ENCODE measurements at regions of chr16 and their contacts with region 1.

Region 1: DNA sequence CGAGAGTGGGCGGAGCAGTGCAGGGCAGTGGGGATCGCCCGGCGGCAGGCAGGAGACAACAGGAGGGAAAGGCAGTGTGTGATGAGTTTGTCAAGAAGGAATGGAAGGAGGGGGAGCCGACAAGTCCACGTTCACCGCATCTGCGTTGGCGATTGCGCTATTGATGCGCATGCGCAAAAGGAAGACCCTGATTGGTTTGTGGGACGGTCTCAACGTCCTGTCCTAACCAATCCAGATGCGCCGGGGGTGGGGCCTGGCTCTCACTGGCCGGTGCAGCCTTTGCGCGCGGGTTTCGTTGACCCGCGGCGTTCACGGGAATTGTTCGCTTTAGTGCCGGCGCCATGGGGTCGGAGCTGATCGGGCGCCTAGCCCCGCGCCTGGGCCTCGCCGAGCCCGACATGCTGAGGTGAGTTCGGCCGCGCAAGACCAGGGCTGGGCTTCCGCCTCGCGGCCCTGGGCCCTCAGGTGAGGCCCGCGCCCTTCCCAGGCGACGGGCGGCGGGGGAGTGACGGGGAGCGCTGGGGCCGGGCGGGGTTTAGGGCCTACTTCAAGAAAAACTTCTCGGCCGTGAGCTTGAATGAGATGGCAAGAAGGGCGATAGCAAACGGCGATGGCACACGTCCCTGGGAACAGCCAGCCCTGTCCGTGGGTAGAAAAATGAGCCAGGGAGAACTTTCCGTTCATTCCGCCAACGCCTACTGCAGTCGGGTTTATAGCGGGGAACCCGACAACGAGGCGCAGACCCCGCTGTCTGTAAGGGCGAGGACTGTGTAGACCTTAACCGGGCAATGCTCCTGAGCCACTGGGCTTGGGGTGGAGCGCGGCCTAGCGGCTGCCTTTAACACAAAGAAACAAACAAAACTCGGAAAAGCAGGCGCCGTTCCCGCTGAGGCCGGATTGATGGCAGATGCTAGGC is at the start of gene ORC6:
- DNase-seq: peak; percentile 96
- H3K4me3 Mint-ChIP-seq: no peak within 1 kb of the TSS
- H3K27ac Mint-ChIP-seq: no peak within 1 kb of the TSS
- H3K4me1 Mint-ChIP-seq: peaks cover 27% of the 10 kb centered on the region
- H3K27me3 Mint-ChIP-seq: no peaks in the 10 kb centered on the region
- total RNA-seq, gene ORC6: 35.1 to 35.8 TPM

Region 2: DNA sequence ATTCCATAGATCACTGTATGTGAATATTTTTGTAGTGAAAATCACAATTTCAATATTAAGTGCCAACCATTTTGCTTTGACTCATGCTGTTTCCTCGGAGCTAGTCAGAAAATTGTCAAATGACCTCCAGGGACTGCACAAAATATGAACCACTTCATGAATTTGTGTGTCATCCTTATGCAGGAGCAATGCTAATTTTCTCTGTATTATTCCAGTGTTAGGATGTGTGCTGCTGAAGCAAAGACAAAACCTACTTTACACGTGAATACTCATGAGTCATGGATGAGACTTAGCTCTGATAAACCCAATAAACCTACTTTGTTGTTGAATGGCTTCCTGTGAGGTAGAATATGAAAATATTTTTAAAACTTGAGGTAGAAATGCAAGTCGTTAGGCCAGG is 133.7 kb before region 1 on chr16:
- CTCF ChIA-PET with region 1: no interaction called
- POLR2A ChIA-PET with region 1: no interaction called
- DNase-seq: no peak
- H3K4me3 Mint-ChIP-seq: no peak overlapping the region
- H3K27ac Mint-ChIP-seq: no peak overlapping the region
- H3K4me1 Mint-ChIP-seq: no peaks in the 10 kb centered on the region
- H3K27me3 Mint-ChIP-seq: peaks cover 10% of the 10 kb centered on the region

Region 3: DNA sequence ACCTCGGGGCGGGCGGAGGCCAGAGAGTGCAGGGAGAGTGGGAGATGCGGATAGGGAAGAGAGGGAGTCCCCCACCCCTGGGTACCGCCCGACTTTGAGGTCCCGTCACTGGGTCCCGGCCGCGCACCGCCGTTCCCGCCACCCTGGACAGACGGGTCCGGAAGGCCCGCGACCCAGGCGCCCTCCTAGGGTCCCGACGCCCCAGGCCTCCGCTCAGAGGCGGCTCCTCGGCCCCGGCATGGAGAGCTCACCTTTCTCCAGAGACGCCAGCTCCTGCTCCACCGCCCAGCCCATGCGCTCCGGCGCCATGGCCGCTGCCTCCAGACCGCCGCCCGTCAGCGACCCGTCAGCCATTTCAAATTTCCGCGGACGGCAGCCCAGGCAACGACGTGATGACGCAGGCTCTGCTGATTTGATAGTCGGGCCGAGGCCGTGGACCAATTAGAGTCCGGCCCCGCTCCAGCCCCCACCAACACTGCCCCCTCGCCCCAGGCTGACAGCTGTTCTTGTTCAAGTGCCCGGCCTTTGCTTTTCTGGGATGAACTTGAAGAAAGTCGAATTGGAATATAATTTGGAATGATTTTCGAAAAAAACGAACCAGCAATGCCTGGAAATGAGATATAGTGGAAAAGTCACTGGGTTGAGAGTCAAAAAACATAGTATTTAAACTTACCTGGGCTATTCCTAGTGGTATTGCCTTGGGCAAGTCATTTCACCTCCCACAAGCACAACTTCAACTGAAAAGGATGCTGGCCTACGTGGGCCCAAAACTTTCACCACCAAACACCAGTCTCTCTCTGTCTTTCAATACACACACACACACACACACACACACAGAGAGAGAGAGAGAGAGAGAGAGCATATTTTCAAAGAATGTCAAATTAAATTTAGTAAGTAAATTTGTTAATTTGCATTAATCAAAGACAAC is 68.4 kb before region 1 on chr16 and contains the start of gene SHCBP1:
- CTCF ChIA-PET with region 1: no interaction called
- POLR2A ChIA-PET with region 1: interaction called, 24 read pairs
- DNase-seq: peak; percentile 89
- H3K4me3 Mint-ChIP-seq: peak within 1 kb of the TSS; percentile 93
- H3K27ac Mint-ChIP-seq: peak within 1 kb of the TSS; percentile 91
- H3K4me1 Mint-ChIP-seq: peaks cover 35% of the 10 kb centered on the region
- H3K27me3 Mint-ChIP-seq: no peaks in the 10 kb centered on the region
- total RNA-seq, gene SHCBP1: 51.0 to 52.5 TPM

Region 4: GRCh38 chr16:46658925-46659324 is 30.7 kb before region 1 on chr16:
- CTCF ChIA-PET with region 1: no interaction called
- POLR2A ChIA-PET with region 1: no interaction called
- DNase-seq: peak; percentile 30
- H3K4me3 Mint-ChIP-seq: no peak overlapping the region
- H3K27ac Mint-ChIP-seq: peak overlapping the region; percentile 24
- H3K4me1 Mint-ChIP-seq: peaks cover 13% of the 10 kb centered on the region
- H3K27me3 Mint-ChIP-seq: no peaks in the 10 kb centered on the region